Sciatic nerve (tissue), 2 donors: ENCODE measurements at regions of chr2 and their contacts with region 1.

Region 1: DNA sequence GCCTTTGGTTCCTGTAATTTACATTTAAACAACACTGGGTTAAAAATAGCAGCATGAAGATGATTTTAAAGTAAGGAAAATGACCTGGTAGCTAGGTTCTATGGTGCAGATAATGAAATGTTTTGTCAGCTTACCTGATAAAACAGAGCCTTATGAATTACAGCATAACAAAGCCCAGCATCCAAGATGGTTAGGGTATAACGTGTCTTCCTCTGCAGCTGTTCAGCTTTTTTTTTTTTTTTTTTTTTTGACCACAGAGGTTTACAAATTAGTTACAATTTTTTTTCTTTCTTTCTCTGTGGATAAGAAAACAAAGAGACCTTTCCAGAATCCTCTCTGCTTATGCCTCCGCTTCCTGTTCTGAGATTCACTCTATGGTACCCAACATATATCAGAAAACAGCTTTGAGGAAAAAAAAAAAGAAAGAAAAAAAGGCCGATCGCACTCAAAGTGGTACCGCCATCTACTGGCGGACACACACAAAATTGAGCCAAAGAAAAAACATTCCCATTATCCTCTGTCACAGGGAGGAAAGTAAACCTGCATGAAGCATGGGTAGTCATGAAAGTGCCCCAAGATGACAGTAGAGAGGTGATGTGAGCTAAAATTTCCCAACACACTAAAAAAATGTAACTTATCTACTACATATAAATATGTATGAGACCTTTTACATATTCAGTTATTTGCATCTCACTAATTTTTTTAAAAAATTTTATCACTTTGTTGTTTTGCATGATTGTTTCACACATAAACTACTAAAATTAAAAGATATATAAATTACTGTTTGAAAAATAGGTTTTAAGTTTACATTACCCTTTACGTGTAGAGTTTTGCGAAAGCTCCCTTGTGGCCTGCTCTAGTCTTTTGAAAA is at the start of gene SCN3A:
- DNase-seq: no peak
- ATAC-seq: no peak
- total RNA-seq, gene SCN3A: 0.58 TPM

Region 2: DNA sequence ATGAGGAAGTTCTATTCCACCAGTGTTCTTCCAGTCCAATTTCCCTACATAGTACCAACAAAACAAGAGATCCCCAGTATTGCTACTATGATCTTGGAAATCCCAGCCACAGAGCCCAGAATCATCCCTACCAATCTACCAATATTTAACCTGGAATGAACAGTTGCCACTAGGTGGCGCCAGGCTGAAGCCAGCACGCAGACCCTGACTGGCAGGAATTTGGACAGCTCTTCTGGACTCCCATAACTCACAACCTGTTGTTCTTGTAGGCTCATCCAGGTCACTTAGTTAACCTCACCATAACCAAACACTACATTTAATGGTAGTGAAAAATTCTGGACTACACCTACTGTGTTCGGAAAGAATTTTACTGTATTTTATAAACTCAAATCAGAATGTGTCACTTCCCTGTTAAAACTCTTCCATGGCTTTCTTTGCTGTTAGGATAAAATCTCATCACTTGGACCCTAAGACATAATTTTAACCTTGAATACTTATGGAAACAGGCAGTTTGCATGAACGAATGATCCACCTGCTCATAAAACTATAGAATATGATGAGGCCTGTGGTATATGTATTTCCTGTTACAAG is 188.8 kb before region 1 on chr2:
- intact Hi-C with region 1: loop called (anchors 10 kb)
- DNase-seq: peak; percentile 79
- ATAC-seq: peak; percentile 39